ENCODE measurements at regions of chr11 and their contacts with region 1.

Region 1: GRCh38 chr11:12963792-12964536 is 45.2 kb upstream of the RASSF10 start:
- DNase-seq: peak; percentile 60
- ATAC-seq: peak; percentile 96
- H3K4me3 ChIP-seq: no peak overlapping the region
- H3K27ac ChIP-seq: no peak overlapping the region
- H3K4me1 ChIP-seq: 0 out of 2 replicates have a peak, but pooled peaks cover 10% of the 10 kb centered on the region
- H3K27me3 ChIP-seq: peaks cover 0 to 5% of the 10 kb centered on the region in 2 experiments; a peak in 1 of 5 replicates
- CTCF ChIP-seq: peak; percentile 95
- EP300 ChIP-seq: no peak
- POLR2A ChIP-seq: no peak
- RAD21 ChIP-seq: peak; percentile 94

Region 2: DNA sequence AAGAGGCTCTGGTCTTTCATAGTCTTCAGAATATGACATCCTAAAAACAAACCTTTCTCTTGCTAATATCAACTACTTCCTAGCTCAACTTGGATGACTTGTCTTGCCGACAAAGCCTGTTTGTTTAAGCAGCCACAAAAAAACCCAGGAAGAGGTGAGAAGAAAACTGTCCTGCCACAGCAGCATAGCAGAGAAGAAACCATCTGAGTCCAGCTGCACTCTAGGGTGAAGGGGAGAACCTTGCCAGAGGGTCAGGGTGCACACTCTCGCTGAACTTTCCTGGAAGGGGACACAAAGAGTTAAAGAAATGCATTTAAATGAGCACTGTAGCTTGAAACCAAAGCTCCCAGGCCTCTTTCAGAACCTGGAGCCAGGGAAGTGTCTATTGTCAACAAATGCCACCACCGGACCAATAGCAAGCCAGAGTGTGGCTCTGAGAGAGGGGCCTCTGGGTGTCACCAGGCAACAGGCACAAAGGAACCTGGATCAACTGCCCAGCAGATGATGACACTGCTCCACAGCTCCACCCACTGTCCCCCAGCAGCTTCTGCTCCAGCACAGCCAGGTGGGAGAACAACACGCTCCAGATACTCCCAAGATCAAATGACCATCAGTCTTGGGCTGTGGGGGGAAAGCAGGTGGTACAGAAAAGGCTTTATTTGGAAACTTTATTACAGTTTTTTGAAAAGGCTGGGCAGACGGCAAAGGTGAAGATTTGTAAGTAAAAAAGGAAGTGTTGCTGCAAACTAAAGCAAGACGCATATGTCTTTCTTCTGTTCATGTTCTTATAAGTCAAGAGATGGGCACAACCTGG is 150.8 kb after region 1 on chr11:
- CTCF ChIA-PET with region 1: interaction called, 11 read pairs
- POLR2A ChIA-PET with region 1: no interaction called
- in situ Hi-C with region 1: no loop called
- intact Hi-C with region 1: loop called (anchors 1 kb)
- DNase-seq: peak; percentile 94
- ATAC-seq: peak; percentile 100
- H3K4me3 ChIP-seq: peak overlapping the region in 2 of 3 experiments; percentile 5 to 47; a peak in 3 of 6 replicates
- H3K27ac ChIP-seq: peak overlapping the region; percentile 73
- H3K4me1 ChIP-seq: peaks cover 62% of the 10 kb centered on the region
- H3K27me3 ChIP-seq: no peaks in the 10 kb centered on the region
- CTCF ChIP-seq: peak; percentile 94
- EP300 ChIP-seq: peak; percentile 16 to 19; a peak in 1 of 4 replicates
- POLR2A ChIP-seq: no peak
- RAD21 ChIP-seq: peak; percentile 73

Region 3: GRCh38 chr11:13152736-13153533 is 189.0 kb after region 1 on chr11:
- CTCF ChIA-PET with region 1: interaction called, 36 read pairs
- POLR2A ChIA-PET with region 1: no interaction called
- in situ Hi-C with region 1: loop called (anchors 5 kb)
- intact Hi-C with region 1: loop called (anchors 1 kb)
- DNase-seq: peak; percentile 25
- ATAC-seq: no peak
- H3K4me3 ChIP-seq: no peak overlapping the region
- H3K27ac ChIP-seq: no peak overlapping the region
- H3K4me1 ChIP-seq: peaks cover 55% of the 10 kb centered on the region
- H3K27me3 ChIP-seq: no peaks in the 10 kb centered on the region; a peak in 1 of 5 replicates
- CTCF ChIP-seq: peak; percentile 59
- EP300 ChIP-seq: no peak
- POLR2A ChIP-seq: no peak
- RAD21 ChIP-seq: peak; percentile 59

Region 4: GRCh38 chr11:13183094-13183825 is 219.3 kb after region 1 on chr11:
- CTCF ChIA-PET with region 1: interaction called, 42 read pairs
- POLR2A ChIA-PET with region 1: no interaction called
- in situ Hi-C with region 1: loop called (anchors 10 kb)
- intact Hi-C with region 1: loop called (anchors 1 kb)
- DNase-seq: peak; percentile 28
- ATAC-seq: peak; percentile 74
- H3K4me3 ChIP-seq: peak overlapping the region in 1 of 3 experiments; percentile 3; a peak in 1 of 6 replicates
- H3K27ac ChIP-seq: no peak overlapping the region
- H3K4me1 ChIP-seq: peaks cover 9% of the 10 kb centered on the region
- H3K27me3 ChIP-seq: no peaks in the 10 kb centered on the region; a peak in 1 of 5 replicates
- CTCF ChIP-seq: peak; percentile 63
- EP300 ChIP-seq: no peak
- POLR2A ChIP-seq: no peak
- RAD21 ChIP-seq: no peak

Region 5: GRCh38 chr11:13238879-13239514 is 275.0 kb after region 1 on chr11:
- CTCF ChIA-PET with region 1: interaction called, 10 read pairs
- POLR2A ChIA-PET with region 1: no interaction called
- in situ Hi-C with region 1: no loop called
- intact Hi-C with region 1: loop called (anchors 1 kb)
- DNase-seq: peak; percentile 35
- ATAC-seq: peak; percentile 80
- H3K4me3 ChIP-seq: no peak overlapping the region
- H3K27ac ChIP-seq: no peak overlapping the region
- H3K4me1 ChIP-seq: no peaks in the 10 kb centered on the region
- H3K27me3 ChIP-seq: peaks cover 2 to 3% of the 10 kb centered on the region in 2 experiments; a peak in 1 of 5 replicates
- CTCF ChIP-seq: peak; percentile 74
- EP300 ChIP-seq: no peak
- POLR2A ChIP-seq: no peak
- RAD21 ChIP-seq: no peak

Region 6: DNA sequence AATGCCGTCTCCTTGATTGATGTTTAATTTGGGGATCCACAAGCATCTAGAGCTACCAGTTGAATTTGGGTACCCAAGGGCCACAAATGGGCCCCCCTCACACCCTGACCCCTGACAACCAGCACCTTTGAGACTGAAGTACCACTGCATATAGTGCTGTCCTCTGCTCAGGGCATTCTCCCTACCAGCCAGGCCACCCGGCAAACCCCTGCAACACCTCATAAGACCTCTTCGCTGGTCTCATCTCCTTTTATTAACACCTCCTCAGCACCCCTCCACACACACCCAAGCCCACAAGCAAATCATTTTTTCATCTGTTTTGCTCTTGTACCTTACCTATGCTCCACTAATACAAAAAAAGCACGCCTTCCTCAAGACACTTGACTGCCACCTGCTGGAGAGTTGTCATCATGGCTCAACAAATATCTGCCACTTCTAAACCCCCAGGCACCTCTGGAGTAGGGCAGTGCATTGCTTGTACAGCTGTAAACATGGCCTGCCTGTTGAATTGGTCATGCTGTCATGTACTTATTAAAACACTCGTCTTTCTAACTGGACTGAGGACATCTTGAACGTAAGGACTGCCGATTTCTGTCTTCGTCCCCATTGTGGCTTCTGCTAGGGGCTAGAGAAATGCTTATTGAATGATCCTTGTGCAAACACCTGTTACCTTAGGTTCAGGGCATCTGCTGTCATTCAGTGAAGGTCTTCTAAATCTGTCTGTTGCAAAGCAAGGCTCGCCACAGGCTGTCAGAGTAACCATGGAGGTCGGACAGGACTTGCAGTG is 380.2 kb after region 1 on chr11:
- CTCF ChIA-PET with region 1: no interaction called
- POLR2A ChIA-PET with region 1: no interaction called
- in situ Hi-C with region 1: loop called (anchors 10 kb)
- intact Hi-C with region 1: no loop called
- DNase-seq: peak; percentile 64
- ATAC-seq: peak; percentile 83
- H3K4me3 ChIP-seq: no peak overlapping the region
- H3K27ac ChIP-seq: no peak overlapping the region
- H3K4me1 ChIP-seq: no peaks in the 10 kb centered on the region
- H3K27me3 ChIP-seq: no peaks in the 10 kb centered on the region
- CTCF ChIP-seq: peak; percentile 83
- EP300 ChIP-seq: no peak
- POLR2A ChIP-seq: no peak
- RAD21 ChIP-seq: no peak